Panc1 (cell line): ENCODE measurements at regions of chr10 and their contacts with region 1.

Region 1: GRCh38 chr10:57679923-57680322 is 587.8 kb downstream of the IPMK start:
- DNase-seq: no peak
- ATAC-seq: no peak
- H3K4me3 ChIP-seq: no peak overlapping the region
- H3K27ac ChIP-seq: no peak overlapping the region
- H3K4me1 ChIP-seq: no peaks in the 10 kb centered on the region
- H3K27me3 ChIP-seq: no peaks in the 10 kb centered on the region
- CTCF ChIP-seq: no peak

Region 2: GRCh38 chr10:55979203-55979602 is 1700.7 kb before region 1 on chr10:
- CTCF ChIA-PET with region 1: no interaction called
- POLR2A ChIA-PET with region 1: interaction called, 10 read pairs
- in situ Hi-C with region 1: no loop called
- intact Hi-C with region 1: no loop called
- DNase-seq: no peak
- ATAC-seq: no peak
- H3K4me3 ChIP-seq: no peak overlapping the region
- H3K27ac ChIP-seq: no peak overlapping the region
- H3K4me1 ChIP-seq: no peaks in the 10 kb centered on the region
- H3K27me3 ChIP-seq: no peaks in the 10 kb centered on the region
- CTCF ChIP-seq: no peak

Region 3: GRCh38 chr10:57657164-57657765 is 22.7 kb before region 1 on chr10:
- CTCF ChIA-PET with region 1: no interaction called
- POLR2A ChIA-PET with region 1: no interaction called
- in situ Hi-C with region 1: no loop called
- intact Hi-C with region 1: no loop called
- DNase-seq: peak; percentile 48
- ATAC-seq: peak; percentile 89
- H3K4me3 ChIP-seq: no peak overlapping the region
- H3K27ac ChIP-seq: no peak overlapping the region
- H3K4me1 ChIP-seq: no peaks in the 10 kb centered on the region
- H3K27me3 ChIP-seq: no peaks in the 10 kb centered on the region
- CTCF ChIP-seq: peak; percentile 94